KBM-7 (cell line): ENCODE measurements at regions of chrX and their contacts with region 1.

Region 1: GRCh38 chrX:56978172-56978571 is 17.2 kb downstream of the SPIN3 start:
- DNase-seq: peak; percentile 84

Region 2: GRCh38 chrX:56281789-56282188 is 696.4 kb before region 1 on chrX:
- in situ Hi-C with region 1: loop called (anchors 25 kb)
- DNase-seq: peak; percentile 46

Region 3: GRCh38 chrX:56788717-56789122 is 189.5 kb before region 1 on chrX:
- in situ Hi-C with region 1: loop called (anchors 25 kb)
- DNase-seq: no peak

Region 4: DNA sequence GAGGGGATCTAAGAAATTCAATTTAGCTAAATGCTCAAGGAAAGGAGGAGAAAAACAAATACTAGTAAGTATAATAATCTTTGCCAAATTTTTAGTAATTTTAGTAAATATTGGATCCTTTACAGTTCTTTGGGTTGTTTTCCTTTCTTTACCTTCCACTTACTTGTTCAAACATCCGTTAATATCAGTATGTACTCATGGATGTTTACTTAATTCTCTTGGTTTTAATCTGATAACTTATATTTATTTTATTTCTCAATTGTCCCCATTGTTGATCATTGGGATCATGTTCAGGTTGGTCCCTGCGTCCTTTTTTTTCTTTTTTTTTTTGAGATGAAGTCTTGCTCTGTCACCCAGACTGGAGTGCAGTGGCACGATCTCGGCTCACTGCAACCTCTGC is 96.3 kb after region 1 on chrX:
- in situ Hi-C with region 1: no loop called
- DNase-seq: no peak